Breast epithelium (tissue), 4 donors: ENCODE measurements at regions of chr3 and their contacts with region 1.

Region 1: DNA sequence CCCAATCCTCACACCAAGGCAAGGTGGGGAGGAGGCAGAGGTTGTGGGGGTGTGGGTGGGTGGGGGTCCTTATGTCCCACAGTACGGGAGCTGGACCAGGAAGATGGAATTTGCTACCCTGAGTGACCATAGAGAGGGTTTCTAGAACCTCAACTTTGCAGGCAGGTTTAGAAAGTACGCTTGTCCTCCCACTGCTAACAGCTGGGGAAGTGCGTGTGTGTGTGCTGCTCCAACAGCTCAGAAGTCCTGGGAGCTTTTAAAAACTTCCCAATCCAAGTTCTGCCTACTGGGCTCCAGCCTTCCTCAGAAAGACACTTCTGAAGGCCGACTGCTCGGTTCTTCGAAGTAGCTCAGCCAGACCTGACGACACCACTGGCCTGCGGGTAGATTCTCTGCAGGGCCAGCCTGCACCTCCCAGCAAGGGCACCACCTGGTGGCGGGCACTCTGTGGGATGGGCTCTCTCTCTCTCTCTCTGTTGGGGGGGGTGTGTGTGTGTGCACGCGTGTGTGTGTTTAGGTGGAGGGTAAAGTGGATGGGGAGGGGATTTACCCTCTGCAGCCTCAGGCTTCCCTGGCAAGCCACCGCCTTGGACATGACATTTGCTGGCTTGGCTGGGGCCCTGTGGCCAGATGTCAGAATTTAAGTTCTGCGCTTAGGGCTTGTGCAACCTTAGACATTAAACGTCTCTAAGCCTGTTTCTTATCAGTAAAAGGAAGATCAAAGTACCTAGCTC is 15.6 kb downstream of the TMEM158 start:
- DNase-seq: peak; percentile 82 to 89
- H3K4me3 ChIP-seq: no peak overlapping the region
- H3K27ac ChIP-seq: peak overlapping the region in 1 of 2 donors; percentile 14
- H3K4me1 ChIP-seq: no peaks in the 10 kb centered on the region
- H3K27me3 ChIP-seq: no peaks in the 10 kb centered on the region
- CTCF ChIP-seq: peak; percentile 85 to 97 (median 88)
- POLR2A ChIP-seq: no peak

Region 2: GRCh38 chr3:45043728-45044299 is 166.7 kb before region 1 on chr3:
- intact Hi-C with region 1: loop called (anchors 5 kb)
- DNase-seq: no peak
- H3K4me3 ChIP-seq: no peak overlapping the region
- H3K27ac ChIP-seq: peak overlapping the region in 1 of 2 donors; percentile 21
- H3K4me1 ChIP-seq: no peaks in the 10 kb centered on the region
- H3K27me3 ChIP-seq: peaks cover 0 to 2% of the 10 kb centered on the region in 2 donors
- CTCF ChIP-seq: no peak
- POLR2A ChIP-seq: no peak

Region 3: DNA sequence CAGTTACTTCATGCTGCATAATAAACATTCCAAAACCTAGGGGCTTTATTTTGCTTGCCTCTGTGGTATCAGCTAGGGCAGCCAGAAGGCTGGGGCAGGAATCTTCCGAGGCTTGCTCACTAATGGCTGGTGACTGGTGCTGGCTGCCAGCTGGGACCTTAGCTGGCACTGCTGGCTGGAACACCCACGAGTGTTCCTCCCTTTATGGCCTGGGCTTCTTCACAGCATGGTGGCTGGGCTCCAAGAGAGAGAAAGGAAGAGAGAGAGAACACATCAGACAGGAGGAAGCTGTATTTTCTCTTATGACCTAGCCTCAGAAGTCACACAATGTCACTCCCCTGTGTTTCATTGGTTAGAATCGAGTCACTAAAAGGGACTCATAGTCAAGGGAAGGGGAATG is 40.4 kb before region 1 on chr3:
- intact Hi-C with region 1: no loop called
- DNase-seq: peak in 1 of 2 donors; percentile 67
- H3K4me3 ChIP-seq: no peak overlapping the region
- H3K27ac ChIP-seq: peak overlapping the region in 1 of 2 donors; percentile 48
- H3K4me1 ChIP-seq: peaks cover 0 to 5% of the 10 kb centered on the region in 2 donors
- H3K27me3 ChIP-seq: no peaks in the 10 kb centered on the region
- CTCF ChIP-seq: no peak
- POLR2A ChIP-seq: no peak